Common myeloid progenitor, CD34-positive (primary cell): ENCODE measurements at regions of chr17 and their contacts with region 1.

Region 1: GRCh38 chr17:32319548-32319905 is 22.4 kb downstream of the C17orf75 start:
- DNase-seq: peak; percentile 82 to 88 (median 87)
- H3K4me3 ChIP-seq: peak overlapping the region in 2 of 7 experiments; percentile 36 to 59
- H3K27ac ChIP-seq: no peak overlapping the region
- H3K4me1 ChIP-seq: peaks cover 0 to 26% (median 20%) of the 10 kb centered on the region in 4 experiments
- H3K27me3 ChIP-seq: peaks cover 0 to 2% (median 0%) of the 10 kb centered on the region in 5 experiments

Region 2: DNA sequence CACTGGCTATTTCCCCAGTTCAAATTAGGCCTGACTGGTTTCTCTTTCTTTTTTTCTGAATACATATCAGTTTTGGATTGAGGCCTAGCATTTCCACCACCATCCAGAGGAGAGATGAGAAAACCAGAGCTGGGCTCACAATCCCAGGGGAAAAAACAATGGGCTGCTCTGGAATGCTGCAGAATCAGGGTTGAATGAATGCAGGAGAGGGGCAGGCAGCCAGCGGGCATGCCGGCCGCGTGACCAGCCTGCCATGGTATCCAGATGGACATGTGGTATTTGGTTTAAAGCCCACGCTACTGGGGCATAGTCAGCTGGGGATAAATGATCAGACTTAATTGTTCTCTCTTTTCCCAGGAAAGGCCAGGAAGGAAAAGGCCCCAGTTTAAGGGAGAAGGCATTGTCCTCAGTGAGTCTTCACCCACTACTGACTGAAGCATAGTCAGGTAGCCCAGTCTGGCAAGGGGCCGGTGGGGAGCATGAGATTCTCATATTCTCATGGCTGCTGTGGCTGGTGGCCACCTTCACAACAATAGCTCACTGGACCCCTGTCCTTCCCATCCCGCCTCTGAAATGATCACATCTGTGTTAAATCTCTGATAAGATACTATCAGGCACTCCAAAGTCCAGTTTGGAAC is 215.9 kb before region 1 on chr17:
- CTCF ChIA-PET with region 1: no interaction called
- POLR2A ChIA-PET with region 1: no interaction called
- DNase-seq: no peak
- H3K4me3 ChIP-seq: no peak overlapping the region
- H3K27ac ChIP-seq: no peak overlapping the region
- H3K4me1 ChIP-seq: peaks cover 3 to 30% (median 20%) of the 10 kb centered on the region in 4 experiments
- H3K27me3 ChIP-seq: no peaks in the 10 kb centered on the region

Region 3: GRCh38 chr17:32206861-32207260 is 112.7 kb before region 1 on chr17:
- CTCF ChIA-PET with region 1: interaction called, 10 read pairs
- POLR2A ChIA-PET with region 1: no interaction called
- DNase-seq: no peak
- H3K4me3 ChIP-seq: no peak overlapping the region
- H3K27ac ChIP-seq: no peak overlapping the region
- H3K4me1 ChIP-seq: no peaks in the 10 kb centered on the region
- H3K27me3 ChIP-seq: no peaks in the 10 kb centered on the region

Region 4: DNA sequence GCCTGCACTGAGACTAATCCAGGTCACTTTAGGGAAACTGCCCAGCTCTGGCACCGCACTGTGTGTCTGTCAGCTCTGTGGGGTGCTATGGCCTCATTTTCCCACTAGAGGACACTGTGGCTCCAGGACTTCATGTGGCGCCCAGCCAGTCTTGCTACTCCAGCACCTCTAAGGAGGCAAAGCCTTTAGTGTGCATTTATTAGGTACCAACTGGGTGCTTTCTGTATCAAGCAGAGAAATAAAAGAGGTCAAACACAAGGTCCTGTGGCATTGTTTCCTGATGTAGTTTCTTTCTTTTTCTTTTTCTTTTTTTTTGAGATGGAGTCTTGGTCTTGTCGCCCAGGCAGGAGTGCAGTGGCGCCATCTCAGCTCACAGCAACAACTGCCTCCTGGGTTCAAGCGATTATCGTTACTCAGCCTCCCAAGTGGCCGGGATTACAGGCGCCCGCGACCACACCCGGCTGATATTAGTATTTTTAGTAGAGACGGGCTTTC is 66.4 kb before region 1 on chr17:
- CTCF ChIA-PET with region 1: interaction called, 15 read pairs
- POLR2A ChIA-PET with region 1: interaction called, 4 read pairs
- DNase-seq: peak; percentile 79 to 88 (median 84)
- H3K4me3 ChIP-seq: no peak overlapping the region
- H3K27ac ChIP-seq: no peak overlapping the region
- H3K4me1 ChIP-seq: peaks cover 0 to 4% (median under 1%) of the 10 kb centered on the region in 4 experiments
- H3K27me3 ChIP-seq: peaks cover 0 to 3% (median 0%) of the 10 kb centered on the region in 5 experiments

Region 5: GRCh38 chr17:32259586-32259985 is 59.9 kb before region 1 on chr17:
- CTCF ChIA-PET with region 1: interaction called, 10 read pairs
- POLR2A ChIA-PET with region 1: interaction called, 4 read pairs
- DNase-seq: no peak
- H3K4me3 ChIP-seq: no peak overlapping the region
- H3K27ac ChIP-seq: no peak overlapping the region
- H3K4me1 ChIP-seq: peaks cover 0 to 11% (median 7%) of the 10 kb centered on the region in 4 experiments
- H3K27me3 ChIP-seq: peaks cover 0 to 29% (median 10%) of the 10 kb centered on the region in 5 experiments

Region 6: GRCh38 chr17:32285746-32286517 is 33.6 kb before region 1 on chr17:
- CTCF ChIA-PET with region 1: interaction called, 41 read pairs
- POLR2A ChIA-PET with region 1: interaction called, 3 read pairs
- DNase-seq: peak in 2 of 3 donors; percentile 27 to 63
- H3K4me3 ChIP-seq: peak overlapping the region in 1 of 7 experiments; percentile 19
- H3K27ac ChIP-seq: no peak overlapping the region
- H3K4me1 ChIP-seq: peaks cover 13 to 74% (median 63%) of the 10 kb centered on the region in 4 experiments
- H3K27me3 ChIP-seq: peaks cover 0 to 8% (median 0%) of the 10 kb centered on the region in 5 experiments

Region 7: DNA sequence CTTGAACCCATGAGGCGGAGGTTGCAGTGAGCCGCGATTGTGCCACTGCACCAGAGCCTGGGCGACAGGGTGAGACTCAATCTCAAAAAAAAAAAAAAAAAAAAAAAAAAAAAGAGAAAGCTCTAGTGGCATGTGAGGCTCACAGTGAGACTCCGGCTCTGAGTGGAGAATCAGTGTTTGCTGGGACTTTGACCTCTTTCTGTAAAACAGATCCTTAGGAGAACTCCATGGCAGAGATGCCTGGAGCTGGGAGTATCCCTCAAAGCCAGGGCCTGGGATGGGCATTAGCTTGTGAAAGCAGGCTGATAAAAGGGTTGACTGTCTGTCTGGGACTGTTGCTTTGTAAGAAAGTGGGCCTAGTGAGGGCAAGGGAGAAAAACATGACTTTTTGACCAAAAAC is 76.8 kb after region 1 on chr17:
- CTCF ChIA-PET with region 1: no interaction called
- POLR2A ChIA-PET with region 1: no interaction called
- DNase-seq: no peak
- H3K4me3 ChIP-seq: no peak overlapping the region
- H3K27ac ChIP-seq: no peak overlapping the region
- H3K4me1 ChIP-seq: no peaks in the 10 kb centered on the region
- H3K27me3 ChIP-seq: no peaks in the 10 kb centered on the region